OCI-LY7 (cell line): ENCODE measurements at regions of chr18 and their contacts with region 1.

Region 1: DNA sequence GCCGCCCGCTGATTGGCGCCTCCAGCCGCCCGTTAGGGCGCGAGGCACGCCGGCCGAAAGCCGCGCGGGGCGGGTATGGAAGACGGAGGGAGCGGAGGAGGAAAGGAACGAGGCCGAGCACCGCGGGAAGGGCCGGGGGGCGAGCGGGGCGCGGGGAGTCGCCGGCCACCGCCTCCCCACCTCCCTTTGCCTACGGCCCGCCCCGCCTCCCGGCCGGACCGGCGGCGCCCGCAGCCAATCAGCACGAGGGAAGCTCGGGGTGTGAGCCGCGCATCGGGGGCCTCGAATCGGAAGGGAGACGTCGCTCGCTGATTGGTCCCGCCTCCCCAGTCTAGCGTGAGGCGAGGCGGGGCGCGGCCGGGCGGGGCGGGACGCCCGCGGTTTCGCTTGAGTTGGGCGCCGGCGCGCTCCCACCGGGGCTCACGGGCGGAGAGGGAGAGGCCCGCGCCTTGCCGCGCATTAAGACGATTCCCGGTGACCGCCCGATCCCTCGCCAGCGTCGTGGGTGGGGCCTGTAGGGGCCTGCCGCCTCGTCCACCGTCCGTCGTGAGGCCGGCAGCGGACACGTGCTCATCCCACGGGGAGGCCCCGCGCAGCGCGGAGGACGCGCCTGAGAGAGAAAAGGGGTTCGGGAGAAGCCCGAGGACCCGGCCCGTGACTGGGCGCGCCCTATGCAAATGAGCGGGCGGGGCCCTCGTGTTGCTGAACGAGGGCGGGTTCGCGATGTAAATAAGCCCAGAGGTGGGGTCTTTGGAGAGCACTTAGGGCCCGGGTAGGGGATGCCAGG is 665 bp upstream of the SMAD2 start:
- DNase-seq: peak; percentile 91
- H3K4me3 ChIP-seq: peak overlapping the region; percentile 80
- H3K27ac ChIP-seq: peak overlapping the region; percentile 88
- H3K4me1 ChIP-seq: peaks cover 18% of the 10 kb centered on the region
- CTCF ChIP-seq: no peak

Region 2: DNA sequence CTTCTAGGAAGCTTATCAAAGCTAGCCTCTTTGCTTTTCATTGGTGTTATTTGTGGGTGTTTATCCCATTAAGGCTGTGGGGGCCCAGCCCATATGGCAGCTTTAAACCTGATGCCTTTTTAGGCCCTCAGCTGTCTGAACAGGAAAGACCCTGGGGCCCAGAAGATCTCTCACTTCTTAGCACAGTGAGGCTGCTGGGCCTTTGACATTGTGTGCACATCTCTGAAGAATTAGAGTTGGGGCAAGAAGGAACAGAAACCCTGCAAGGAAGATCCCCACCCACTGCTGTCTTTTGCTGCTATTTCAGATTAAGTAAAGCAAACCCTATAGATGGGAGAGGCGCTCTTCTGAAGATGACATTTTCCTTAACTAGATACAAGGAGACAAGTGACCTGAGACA is 250.6 kb before region 1 on chr18:
- CTCF ChIA-PET with region 1: no interaction called
- POLR2A ChIA-PET with region 1: no interaction called
- intact Hi-C with region 1: loop called (anchors 5 kb)
- DNase-seq: peak; percentile 1
- H3K4me3 ChIP-seq: no peak overlapping the region
- H3K27ac ChIP-seq: peak overlapping the region; percentile 15
- H3K4me1 ChIP-seq: no peaks in the 10 kb centered on the region
- CTCF ChIP-seq: no peak

Region 3: GRCh38 chr18:47979611-47980200 is 48.6 kb after region 1 on chr18:
- CTCF ChIA-PET with region 1: no interaction called
- POLR2A ChIA-PET with region 1: no interaction called
- intact Hi-C with region 1: loop called (anchors 5 kb)
- DNase-seq: no peak
- H3K4me3 ChIP-seq: no peak overlapping the region
- H3K27ac ChIP-seq: no peak overlapping the region
- H3K4me1 ChIP-seq: no peaks in the 10 kb centered on the region
- CTCF ChIP-seq: no peak

Region 4: GRCh38 chr18:48022531-48023329 is 91.6 kb after region 1 on chr18:
- CTCF ChIA-PET with region 1: no interaction called
- POLR2A ChIA-PET with region 1: no interaction called
- intact Hi-C with region 1: loop called (anchors 1 kb)
- DNase-seq: peak; percentile 52
- H3K4me3 ChIP-seq: no peak overlapping the region
- H3K27ac ChIP-seq: no peak overlapping the region
- H3K4me1 ChIP-seq: no peaks in the 10 kb centered on the region
- CTCF ChIP-seq: peak; percentile 66